Mammary epithelial cell (primary cell): ENCODE measurements at regions of chr12 and their contacts with region 1.

Region 1: GRCh38 chr12:52879394-52880351 is 25.2 kb downstream of the KRT8 start:
- DNase-seq: peak; percentile 79
- H3K4me3 ChIP-seq: peak overlapping the region in 1 of 3 experiments; percentile 36
- H3K27ac ChIP-seq: peak overlapping the region; percentile 6
- H3K4me1 ChIP-seq: peaks cover 51% of the 10 kb centered on the region
- H3K27me3 ChIP-seq: no peaks in the 10 kb centered on the region
- CTCF ChIP-seq: peak; percentile 91 to 99

Region 2: DNA sequence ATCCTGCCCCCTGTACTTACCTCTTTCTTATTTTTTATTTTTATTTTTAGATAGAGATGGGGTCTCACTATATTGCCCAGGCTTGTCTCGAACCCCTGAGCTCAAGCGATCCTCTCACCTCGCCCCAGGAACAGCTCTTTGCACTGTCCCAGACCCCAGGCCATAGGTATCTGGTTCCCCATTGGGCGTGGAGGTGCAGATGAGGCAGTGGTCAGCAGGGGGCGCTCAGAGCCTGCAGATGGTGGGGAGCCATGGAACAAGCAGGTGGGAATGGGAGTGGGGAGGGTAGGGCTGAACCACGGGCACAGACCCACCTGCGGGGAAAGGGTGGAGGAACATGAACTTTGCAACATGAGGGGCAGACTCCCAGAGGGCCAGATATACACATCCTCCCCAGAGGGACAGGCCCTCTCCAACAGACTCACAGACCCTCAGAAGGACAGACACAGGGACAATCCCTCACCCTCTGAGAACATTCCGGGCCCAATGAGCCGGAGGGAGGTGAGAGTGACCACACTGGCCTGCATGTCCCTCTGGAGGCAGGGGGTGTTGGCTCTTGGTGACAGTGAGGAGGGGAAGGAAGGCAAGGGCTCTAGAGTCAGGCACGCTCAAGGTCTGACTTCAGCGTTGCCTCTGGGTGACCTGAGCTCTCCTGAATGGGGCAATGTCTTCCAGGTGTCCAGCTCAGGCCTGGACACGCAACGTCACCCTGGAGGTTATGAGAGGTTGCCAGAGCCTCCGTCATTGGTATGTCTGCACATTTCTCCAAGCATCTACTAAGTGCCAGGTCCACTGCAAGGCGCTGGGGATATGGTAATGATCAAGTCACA is 722.7 kb before region 1 on chr12:
- CTCF ChIA-PET with region 1: interaction called, 3 read pairs
- dilution Hi-C with region 1: no loop called
- in situ Hi-C with region 1: loop called in 1 of 2 experiments (anchors 5 kb)
- intact Hi-C with region 1: loop called (anchors 1 kb)
- DNase-seq: peak; percentile 80
- H3K4me3 ChIP-seq: no peak overlapping the region
- H3K27ac ChIP-seq: peak overlapping the region; percentile 96
- H3K4me1 ChIP-seq: peaks cover 46% of the 10 kb centered on the region
- H3K27me3 ChIP-seq: no peaks in the 10 kb centered on the region
- CTCF ChIP-seq: peak; percentile 90 to 98

Region 3: GRCh38 chr12:52278541-52279421 is 600.9 kb before region 1 on chr12:
- CTCF ChIA-PET with region 1: no interaction called
- dilution Hi-C with region 1: no loop called
- in situ Hi-C with region 1: no loop called
- intact Hi-C with region 1: loop called (anchors 2 kb)
- DNase-seq: peak; percentile 73
- H3K4me3 ChIP-seq: peak overlapping the region in 1 of 3 experiments; percentile 20
- H3K27ac ChIP-seq: peak overlapping the region; percentile 100
- H3K4me1 ChIP-seq: peaks cover 45% of the 10 kb centered on the region
- H3K27me3 ChIP-seq: no peaks in the 10 kb centered on the region
- CTCF ChIP-seq: peak; percentile 76 to 100

Region 4: GRCh38 chr12:52380271-52380694 is 499.4 kb before region 1 on chr12:
- CTCF ChIA-PET with region 1: no interaction called
- dilution Hi-C with region 1: no loop called
- in situ Hi-C with region 1: loop called in 1 of 2 experiments (anchors 5 kb)
- intact Hi-C with region 1: no loop called
- DNase-seq: peak; percentile 58
- H3K4me3 ChIP-seq: no peak overlapping the region
- H3K27ac ChIP-seq: no peak overlapping the region
- H3K4me1 ChIP-seq: no peaks in the 10 kb centered on the region
- H3K27me3 ChIP-seq: no peaks in the 10 kb centered on the region
- CTCF ChIP-seq: peak; percentile 73 to 88

Region 5: DNA sequence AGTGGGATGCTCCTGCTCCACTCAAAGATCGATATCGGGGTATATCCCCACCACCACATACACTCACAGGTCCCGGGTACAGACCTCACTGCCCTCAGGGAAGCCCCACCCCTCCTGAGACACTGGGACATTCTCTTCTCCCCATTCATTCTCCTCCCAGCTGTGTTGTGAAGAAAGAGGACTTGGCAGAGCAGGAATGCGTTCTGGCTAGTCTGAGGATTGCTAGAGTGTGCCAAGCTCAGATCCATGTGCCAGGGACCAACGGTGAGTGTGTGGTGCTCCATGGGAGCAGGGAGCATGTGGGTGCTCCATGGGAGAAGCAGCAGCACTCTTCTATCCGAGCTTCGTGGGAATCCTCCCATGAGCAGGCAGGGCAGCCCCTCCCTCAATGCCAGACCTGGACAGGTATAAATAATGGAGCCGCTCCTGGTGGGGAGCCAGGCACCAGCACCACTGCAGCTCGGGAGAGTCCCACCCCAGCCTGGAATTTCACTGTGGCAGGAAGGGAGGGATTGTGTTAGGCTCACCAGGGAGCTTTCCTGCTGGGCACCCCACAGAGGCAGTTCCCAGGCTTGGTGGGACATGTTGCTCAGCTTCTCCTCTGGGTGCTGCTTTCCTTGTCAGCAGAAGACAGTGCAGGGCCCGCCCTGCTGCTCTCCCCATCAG is 357.2 kb before region 1 on chr12:
- CTCF ChIA-PET with region 1: no interaction called
- dilution Hi-C with region 1: no loop called
- in situ Hi-C with region 1: loop called in 1 of 2 experiments (anchors 5 kb)
- intact Hi-C with region 1: no loop called
- DNase-seq: peak; percentile 97
- H3K4me3 ChIP-seq: peak overlapping the region; percentile 1 to 32 (median 16)
- H3K27ac ChIP-seq: peak overlapping the region; percentile 99
- H3K4me1 ChIP-seq: peaks cover 61% of the 10 kb centered on the region
- H3K27me3 ChIP-seq: no peaks in the 10 kb centered on the region
- CTCF ChIP-seq: no peak

Region 6: GRCh38 chr12:52615208-52615868 is 264.3 kb before region 1 on chr12:
- CTCF ChIA-PET with region 1: interaction called, 10 read pairs
- dilution Hi-C with region 1: no loop called
- in situ Hi-C with region 1: no loop called
- intact Hi-C with region 1: no loop called
- DNase-seq: peak; percentile 26
- H3K4me3 ChIP-seq: no peak overlapping the region
- H3K27ac ChIP-seq: no peak overlapping the region
- H3K4me1 ChIP-seq: no peaks in the 10 kb centered on the region
- H3K27me3 ChIP-seq: peaks cover 4% of the 10 kb centered on the region
- CTCF ChIP-seq: no peak